ENCODE measurements at regions of chr16 and their contacts with region 1.

Region 1: GRCh38 chr16:87628940-87629339 is 26.6 kb downstream of the JPH3 start:
- DNase-seq: no peak
- H3K4me3 ChIP-seq: no peak overlapping the region
- H3K27ac ChIP-seq: no peak overlapping the region
- H3K4me1 ChIP-seq: no peaks in the 10 kb centered on the region
- H3K27me3 ChIP-seq: no peaks in the 10 kb centered on the region
- CTCF ChIP-seq: no peak

Region 2: GRCh38 chr16:87420026-87420981 is 208.6 kb before region 1 on chr16:
- intact Hi-C with region 1: loop called (anchors 10 kb)
- DNase-seq: no peak
- H3K4me3 ChIP-seq: no peak overlapping the region
- H3K27ac ChIP-seq: no peak overlapping the region
- H3K4me1 ChIP-seq: no peaks in the 10 kb centered on the region
- H3K27me3 ChIP-seq: no peaks in the 10 kb centered on the region
- CTCF ChIP-seq: no peak

Measured in kidney (tissue), 22 donors.